ENCODE measurements at regions of chr1 and their contacts with region 1.

Region 1: DNA sequence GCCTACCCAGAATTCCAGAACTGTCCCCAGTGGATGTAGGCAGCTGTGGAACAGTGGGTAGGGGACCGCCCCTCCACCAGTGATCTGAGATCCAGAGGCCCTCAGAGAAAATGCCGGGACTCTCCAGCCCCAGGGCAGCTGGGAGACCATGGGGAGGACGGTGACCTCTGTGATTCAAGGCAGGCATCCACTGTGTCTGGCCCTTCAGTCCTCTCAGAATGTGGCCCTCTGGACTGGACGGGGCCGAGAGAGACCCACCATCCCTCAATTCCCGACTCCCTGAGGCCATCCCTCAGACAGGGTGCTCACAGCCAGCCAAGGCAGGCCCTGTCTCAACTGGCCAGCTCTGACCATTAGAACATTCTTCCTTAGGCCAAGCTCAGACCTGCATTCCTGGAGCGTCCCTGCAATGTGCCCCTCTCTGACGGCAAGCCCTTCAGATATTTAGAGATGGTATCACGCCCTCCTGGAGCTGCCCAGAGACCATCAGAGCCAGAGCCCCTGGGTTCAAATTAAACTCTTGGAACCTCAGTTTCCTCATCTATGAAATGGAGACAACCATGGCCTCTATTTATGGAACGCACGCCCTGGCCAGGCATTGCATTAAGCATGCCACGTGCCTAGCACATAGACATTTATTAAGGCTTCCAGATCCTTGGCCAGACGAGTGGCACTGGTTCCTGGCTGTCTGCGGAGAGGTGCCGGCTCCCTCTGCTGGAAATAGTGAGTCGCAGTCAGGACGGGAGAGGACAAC is 9.6 kb upstream of the EPS8L3 start:
- DNase-seq: peak; percentile 88
- CTCF ChIP-seq: peak; percentile 81

Region 2: DNA sequence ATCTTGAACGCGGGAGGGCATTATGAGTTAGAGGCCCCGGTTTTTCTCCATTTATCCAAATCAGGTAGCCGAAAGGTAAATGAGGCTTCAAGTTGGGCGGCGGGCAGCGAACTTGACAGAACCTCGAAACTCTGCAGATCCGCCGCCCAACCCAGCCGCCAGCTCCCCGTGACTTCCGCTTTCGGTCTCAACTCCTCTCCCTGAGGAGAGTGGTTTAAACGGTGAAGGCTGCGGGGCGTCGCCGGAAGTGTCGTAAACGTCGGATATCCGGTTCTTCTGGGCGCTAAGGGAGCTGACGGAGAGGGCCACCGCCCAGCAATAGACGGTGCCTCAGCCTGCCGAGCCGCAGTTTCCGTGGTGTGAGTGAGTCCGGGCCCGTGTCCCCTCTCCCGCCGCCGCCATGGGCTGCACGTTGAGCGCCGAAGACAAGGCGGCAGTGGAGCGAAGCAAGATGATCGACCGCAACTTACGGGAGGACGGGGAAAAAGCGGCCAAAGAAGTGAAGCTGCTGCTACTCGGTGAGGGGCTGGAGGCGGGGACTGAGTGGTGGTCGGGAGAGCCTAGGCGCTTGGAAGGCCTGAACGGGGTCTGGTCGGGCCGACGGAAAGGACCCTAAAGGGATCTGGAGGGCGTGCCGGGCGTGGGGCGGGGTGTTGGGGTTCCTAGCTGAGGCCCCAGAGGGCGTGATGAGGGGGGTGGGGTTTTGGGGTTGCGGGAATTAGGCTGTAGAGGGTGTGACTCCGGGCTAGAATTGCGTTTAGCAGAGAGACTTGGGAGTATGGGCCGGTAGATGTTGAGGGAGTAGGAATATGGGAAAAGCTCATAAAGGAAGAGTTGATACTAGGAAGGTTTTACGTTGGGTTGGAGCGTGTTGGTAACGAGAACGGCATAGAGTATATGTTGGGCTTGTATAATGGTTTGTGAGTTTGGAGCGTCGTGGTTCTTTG is 224.7 kb before region 1 on chr1 and contains the start of gene GNAI3:
- in situ Hi-C with region 1: loop called (anchors 5 kb)
- DNase-seq: peak; percentile 94
- CTCF ChIP-seq: no peak

Region 3: DNA sequence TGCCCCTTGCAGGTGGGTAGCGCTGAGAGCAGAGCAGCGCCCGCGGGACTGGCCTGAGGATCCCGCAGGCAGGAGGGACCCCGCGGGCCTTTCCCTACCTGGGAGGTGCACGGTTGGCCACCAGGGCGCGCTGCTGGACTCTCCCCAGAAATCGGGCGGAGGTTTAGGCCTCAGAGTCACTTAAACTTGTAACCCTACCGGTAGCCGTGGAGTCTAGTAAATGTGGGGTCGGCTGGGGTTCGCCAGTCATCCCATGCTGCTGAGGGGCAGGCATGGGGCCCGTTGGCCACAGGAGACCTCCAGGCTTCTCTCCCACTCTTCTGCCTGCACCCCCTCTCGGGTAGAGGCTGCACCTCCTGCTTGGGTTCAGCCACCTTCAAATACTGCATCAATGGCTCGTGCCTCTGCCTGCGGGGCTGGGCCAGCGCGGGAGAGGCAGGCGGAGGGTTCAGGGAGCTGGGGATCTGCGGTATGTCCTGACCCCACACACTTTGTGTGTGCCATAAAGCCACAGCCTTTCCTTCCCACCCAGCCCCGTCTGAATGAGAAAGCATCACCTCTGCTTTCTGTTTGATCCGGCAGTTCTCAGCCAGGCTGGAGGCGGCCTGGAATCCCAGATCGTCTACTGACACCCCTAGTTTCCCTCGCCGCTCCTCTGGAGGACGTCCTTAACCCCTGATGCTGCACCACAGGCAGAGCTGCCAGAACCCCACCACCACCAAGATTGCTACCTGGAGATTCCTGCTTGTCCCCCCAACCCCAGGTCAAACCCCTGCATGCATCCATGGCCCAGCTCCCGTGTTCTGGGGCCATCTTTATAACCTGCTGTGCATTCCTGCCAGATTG is 129.7 kb before region 1 on chr1:
- in situ Hi-C with region 1: loop called (anchors 5 kb)
- DNase-seq: peak; percentile 90
- CTCF ChIP-seq: peak; percentile 90